Activated CD8-positive, alpha-beta T cell treated with anti-CD3 and anti-CD28 coated beads, Interleukin-2, amount 10 ng/mL, durations not matched to agents 7 days and 5 days (primary cell): ENCODE measurements at regions of chr1 and their contacts with region 1.

Region 1: DNA sequence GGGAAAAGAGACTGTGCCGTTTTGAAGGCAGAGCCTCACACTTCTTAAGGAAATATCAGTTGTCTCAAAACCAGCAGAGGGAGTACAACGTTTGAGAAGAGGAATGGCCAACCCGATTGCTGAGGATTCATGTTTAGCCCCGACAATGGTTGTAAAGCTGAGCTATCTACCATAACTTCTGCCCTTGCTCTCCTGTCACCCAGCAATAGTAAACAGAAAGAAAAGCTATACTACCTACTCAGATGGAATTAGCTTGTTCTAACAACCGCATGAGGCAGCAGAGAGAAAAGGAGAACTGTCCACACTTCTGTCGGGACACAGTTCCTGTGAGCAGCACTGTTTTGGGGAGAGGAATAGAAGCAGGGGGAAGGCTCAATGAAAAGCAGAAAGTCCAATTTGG is 91.2 kb downstream of the SLC45A1 start:
- DNase-seq: no peak
- ATAC-seq: peak; percentile 53
- H3K4me3 Mint-ChIP-seq: no peak overlapping the region
- H3K27ac Mint-ChIP-seq: no peak overlapping the region
- H3K4me1 Mint-ChIP-seq: peaks cover 34% of the 10 kb centered on the region
- H3K27me3 Mint-ChIP-seq: no peaks in the 10 kb centered on the region

Region 2: GRCh38 chr1:8364528-8365442 is 44.3 kb before region 1 on chr1:
- CTCF ChIA-PET with region 1: no interaction called
- POLR2A ChIA-PET with region 1: no interaction called
- DNase-seq: no peak
- ATAC-seq: no peak
- H3K4me3 Mint-ChIP-seq: no peak overlapping the region
- H3K27ac Mint-ChIP-seq: no peak overlapping the region
- H3K4me1 Mint-ChIP-seq: peaks cover 2% of the 10 kb centered on the region
- H3K27me3 Mint-ChIP-seq: no peaks in the 10 kb centered on the region

Region 3: GRCh38 chr1:8396786-8397406 is 12.2 kb before region 1 on chr1:
- CTCF ChIA-PET with region 1: interaction called, 11 read pairs
- POLR2A ChIA-PET with region 1: no interaction called
- DNase-seq: no peak
- ATAC-seq: peak; percentile 40
- H3K4me3 Mint-ChIP-seq: no peak overlapping the region
- H3K27ac Mint-ChIP-seq: peak overlapping the region; percentile 47
- H3K4me1 Mint-ChIP-seq: peaks cover 55% of the 10 kb centered on the region
- H3K27me3 Mint-ChIP-seq: no peaks in the 10 kb centered on the region

Region 4: DNA sequence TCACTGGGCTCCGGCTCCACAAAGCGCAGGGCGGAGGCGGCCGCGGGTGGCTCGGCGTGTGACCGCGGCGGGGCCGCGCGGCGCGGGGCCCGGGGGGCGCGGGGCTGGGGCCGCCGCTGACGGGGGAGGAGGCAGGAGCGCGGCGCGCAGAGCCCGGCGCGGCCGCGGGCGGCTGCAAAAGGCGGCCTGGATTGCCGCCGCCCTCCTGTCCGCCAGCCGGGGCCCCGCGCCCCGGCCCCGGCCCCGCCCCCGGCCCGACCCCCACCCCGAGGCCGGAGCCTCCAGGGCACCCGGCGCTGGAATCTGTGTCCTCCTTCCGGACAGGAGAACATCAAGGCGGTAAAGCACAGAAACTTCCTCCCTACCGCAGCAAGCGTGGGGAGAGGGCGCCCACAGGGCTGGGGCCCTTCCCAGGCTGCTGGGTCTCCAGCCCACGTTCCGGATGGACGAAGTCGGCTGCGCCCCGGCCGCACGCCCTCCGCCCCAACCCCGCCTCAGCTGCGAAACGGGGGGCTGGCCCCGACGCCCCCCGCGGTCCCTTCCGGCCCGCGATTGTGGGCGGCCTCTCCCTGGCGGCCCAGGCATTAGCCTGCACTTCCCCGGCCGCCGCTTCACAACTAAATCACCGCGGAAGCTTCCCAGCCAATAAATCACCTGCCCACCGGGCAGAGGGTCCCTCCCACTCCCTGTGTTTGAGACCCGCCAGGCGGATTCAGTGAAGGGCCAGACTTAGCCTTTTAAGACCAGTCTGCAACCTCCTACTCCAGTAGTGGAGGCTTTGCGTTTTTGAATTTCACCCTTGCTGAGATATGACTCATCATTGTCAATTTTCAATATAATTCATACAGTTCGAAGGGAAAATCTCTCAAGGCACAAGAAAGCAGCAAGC is 14.8 kb after region 1 on chr1:
- CTCF ChIA-PET with region 1: interaction called, 38 read pairs
- POLR2A ChIA-PET with region 1: interaction called, 3 read pairs
- DNase-seq: peak; percentile 54
- ATAC-seq: peak; percentile 48
- H3K4me3 Mint-ChIP-seq: peak overlapping the region; percentile 84
- H3K27ac Mint-ChIP-seq: peak overlapping the region; percentile 91
- H3K4me1 Mint-ChIP-seq: peaks cover 45% of the 10 kb centered on the region
- H3K27me3 Mint-ChIP-seq: peaks cover 3% of the 10 kb centered on the region

Region 5: GRCh38 chr1:8431019-8431418 is 21.9 kb after region 1 on chr1:
- CTCF ChIA-PET with region 1: interaction called, 11 read pairs
- POLR2A ChIA-PET with region 1: no interaction called
- DNase-seq: peak; percentile 58
- ATAC-seq: peak; percentile 32
- H3K4me3 Mint-ChIP-seq: peak overlapping the region; percentile 11
- H3K27ac Mint-ChIP-seq: peak overlapping the region; percentile 50
- H3K4me1 Mint-ChIP-seq: peaks cover 61% of the 10 kb centered on the region
- H3K27me3 Mint-ChIP-seq: no peaks in the 10 kb centered on the region

Region 6: GRCh38 chr1:8497210-8497801 is 88.2 kb after region 1 on chr1:
- CTCF ChIA-PET with region 1: no interaction called
- POLR2A ChIA-PET with region 1: no interaction called
- DNase-seq: no peak
- ATAC-seq: no peak
- H3K4me3 Mint-ChIP-seq: no peak overlapping the region
- H3K27ac Mint-ChIP-seq: no peak overlapping the region
- H3K4me1 Mint-ChIP-seq: peaks cover 13% of the 10 kb centered on the region
- H3K27me3 Mint-ChIP-seq: no peaks in the 10 kb centered on the region

Region 7: GRCh38 chr1:8525558-8526275 is 116.6 kb after region 1 on chr1:
- CTCF ChIA-PET with region 1: interaction called, 11 read pairs
- POLR2A ChIA-PET with region 1: no interaction called
- DNase-seq: peak; percentile 65
- ATAC-seq: peak; percentile 80
- H3K4me3 Mint-ChIP-seq: no peak overlapping the region
- H3K27ac Mint-ChIP-seq: no peak overlapping the region
- H3K4me1 Mint-ChIP-seq: peaks cover 8% of the 10 kb centered on the region
- H3K27me3 Mint-ChIP-seq: no peaks in the 10 kb centered on the region